Adrenal gland (tissue), 19 donors: ENCODE measurements at regions of chr1 and their contacts with region 1.

Region 1: DNA sequence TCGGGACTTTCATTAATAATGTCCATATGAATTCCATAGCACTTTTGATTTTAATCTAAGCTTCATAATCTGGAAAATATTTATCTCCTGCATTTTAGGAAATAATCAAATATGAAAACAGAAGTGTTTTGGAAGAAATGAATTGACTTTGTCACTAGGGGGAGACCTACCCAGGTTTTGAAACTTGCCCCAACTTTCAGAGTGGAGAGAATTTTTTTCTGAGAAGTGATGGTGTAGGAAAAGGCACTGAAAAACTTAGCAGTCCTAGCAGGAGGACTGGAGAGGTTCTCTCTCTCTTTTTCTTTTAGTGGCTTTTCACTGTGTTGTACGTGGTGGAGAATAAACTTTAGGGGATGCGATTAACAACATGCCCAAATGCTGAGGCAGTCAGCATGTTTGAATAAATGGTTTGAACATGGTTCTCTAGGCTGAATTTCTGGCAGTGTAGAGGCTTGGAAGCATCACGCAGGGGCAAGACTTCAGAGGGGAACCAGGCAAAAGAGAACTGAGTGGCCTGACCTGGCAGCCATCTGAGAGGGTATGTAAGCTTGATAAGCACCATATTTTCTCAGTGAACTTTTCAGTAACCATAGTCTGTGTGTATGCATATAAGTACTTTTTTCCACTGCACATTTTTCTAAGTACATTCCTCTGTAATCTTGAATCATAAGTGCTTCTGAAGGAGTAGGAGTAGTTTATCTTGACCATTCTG is 68.3 kb upstream of the NEK7 start:
- DNase-seq: peak in 4 of 7 donors; percentile 11 to 22 (median 20)
- H3K4me3 ChIP-seq: no peak overlapping the region
- H3K27ac ChIP-seq: no peak overlapping the region
- H3K4me1 ChIP-seq: no peaks in the 10 kb centered on the region
- H3K27me3 ChIP-seq: no peaks in the 10 kb centered on the region
- CTCF ChIP-seq: peak; percentile 32 to 74 (median 64)
- POLR2A ChIP-seq: no peak

Region 2: DNA sequence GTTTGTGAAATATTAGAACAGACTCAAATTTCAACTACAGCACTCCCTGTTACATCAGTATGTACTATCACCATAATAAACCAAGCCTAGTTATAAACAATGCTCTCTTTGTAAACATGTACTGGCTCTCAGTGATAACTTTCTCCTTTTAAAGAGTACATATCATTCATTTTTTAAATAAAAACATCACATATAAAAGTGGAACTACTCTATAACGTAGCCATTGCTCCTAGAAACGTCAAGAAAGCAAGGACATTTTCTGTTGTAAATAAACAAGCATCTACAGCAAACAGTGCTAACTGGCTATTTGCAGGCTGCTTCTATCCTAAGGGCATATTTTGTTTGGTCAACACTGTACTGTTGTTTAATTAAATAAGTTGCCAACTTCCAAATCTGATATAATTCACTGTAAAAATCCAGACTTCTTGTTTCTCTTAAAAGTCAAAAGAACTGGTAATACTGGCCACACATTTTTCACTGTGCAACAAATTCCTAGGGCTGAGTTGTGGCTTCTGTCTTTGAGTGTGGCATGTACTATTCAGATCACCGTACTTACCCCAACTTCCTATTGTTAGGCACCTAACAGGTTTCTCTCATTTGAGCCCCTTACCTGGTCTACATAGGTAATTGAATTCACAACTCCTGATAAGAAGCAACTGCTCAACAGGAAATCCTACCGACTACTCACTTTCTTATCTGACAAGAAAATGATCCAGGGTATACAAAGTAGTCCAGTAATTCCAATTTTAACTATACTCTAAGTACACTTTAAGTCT is 425.1 kb before region 1 on chr1:
- intact Hi-C with region 1: no loop called
- DNase-seq: no peak
- H3K4me3 ChIP-seq: no peak overlapping the region
- H3K27ac ChIP-seq: no peak overlapping the region
- H3K4me1 ChIP-seq: peaks cover 0 to 20% of the 10 kb centered on the region in 2 donors
- H3K27me3 ChIP-seq: no peaks in the 10 kb centered on the region
- CTCF ChIP-seq: no peak
- POLR2A ChIP-seq: no peak

Region 3: GRCh38 chr1:198157241-198157846 is 68.8 kb after region 1 on chr1:
- intact Hi-C with region 1: loop called in 1 of 2 experiments (anchors 5 kb)
- DNase-seq: peak; percentile 86 to 97 (median 91)
- H3K4me3 ChIP-seq: peak overlapping the region; percentile 39 to 99 (median 98)
- H3K27ac ChIP-seq: peak overlapping the region; percentile 88 to 98 (median 93)
- H3K4me1 ChIP-seq: peaks cover 17 to 36% of the 10 kb centered on the region in 2 donors
- H3K27me3 ChIP-seq: no peaks in the 10 kb centered on the region
- CTCF ChIP-seq: peak in 1 of 6 experiments; percentile 0
- POLR2A ChIP-seq: peak in 1 of 2 donors; percentile 61

Region 4: DNA sequence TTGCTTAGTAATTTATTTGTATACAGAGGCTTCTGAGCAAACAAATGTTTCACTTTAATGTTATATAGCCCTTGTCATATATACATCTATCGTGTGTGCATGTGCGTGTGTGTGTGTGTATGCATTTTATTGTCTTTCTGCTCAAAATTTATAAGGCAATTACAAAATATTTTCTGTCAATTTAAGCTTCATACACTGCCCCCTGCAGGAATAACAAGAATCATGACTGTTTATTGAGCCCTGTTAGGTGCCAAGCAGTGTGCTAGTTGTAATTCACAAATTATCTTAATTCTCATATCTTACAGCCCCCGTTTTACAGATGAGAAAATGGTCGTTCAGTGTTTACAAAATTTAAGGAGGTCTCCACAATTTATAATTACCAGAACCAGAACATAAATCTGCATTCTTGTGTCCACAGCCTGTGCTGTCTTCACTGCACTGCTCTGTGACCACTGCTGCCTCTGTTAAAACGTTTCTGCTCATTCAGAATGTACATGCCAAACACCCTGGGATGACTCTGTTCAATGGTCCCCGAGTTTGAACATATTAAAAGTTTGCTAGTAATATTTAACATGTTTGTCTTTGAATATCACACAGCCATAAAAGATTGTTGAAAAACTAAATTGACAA is 270.6 kb after region 1 on chr1:
- intact Hi-C with region 1: loop called in 1 of 2 experiments (anchors 10 kb)
- DNase-seq: no peak
- H3K4me3 ChIP-seq: no peak overlapping the region
- H3K27ac ChIP-seq: no peak overlapping the region
- H3K4me1 ChIP-seq: no peaks in the 10 kb centered on the region
- H3K27me3 ChIP-seq: no peaks in the 10 kb centered on the region
- CTCF ChIP-seq: peak; percentile 25 to 62 (median 56)
- POLR2A ChIP-seq: no peak

Region 5: DNA sequence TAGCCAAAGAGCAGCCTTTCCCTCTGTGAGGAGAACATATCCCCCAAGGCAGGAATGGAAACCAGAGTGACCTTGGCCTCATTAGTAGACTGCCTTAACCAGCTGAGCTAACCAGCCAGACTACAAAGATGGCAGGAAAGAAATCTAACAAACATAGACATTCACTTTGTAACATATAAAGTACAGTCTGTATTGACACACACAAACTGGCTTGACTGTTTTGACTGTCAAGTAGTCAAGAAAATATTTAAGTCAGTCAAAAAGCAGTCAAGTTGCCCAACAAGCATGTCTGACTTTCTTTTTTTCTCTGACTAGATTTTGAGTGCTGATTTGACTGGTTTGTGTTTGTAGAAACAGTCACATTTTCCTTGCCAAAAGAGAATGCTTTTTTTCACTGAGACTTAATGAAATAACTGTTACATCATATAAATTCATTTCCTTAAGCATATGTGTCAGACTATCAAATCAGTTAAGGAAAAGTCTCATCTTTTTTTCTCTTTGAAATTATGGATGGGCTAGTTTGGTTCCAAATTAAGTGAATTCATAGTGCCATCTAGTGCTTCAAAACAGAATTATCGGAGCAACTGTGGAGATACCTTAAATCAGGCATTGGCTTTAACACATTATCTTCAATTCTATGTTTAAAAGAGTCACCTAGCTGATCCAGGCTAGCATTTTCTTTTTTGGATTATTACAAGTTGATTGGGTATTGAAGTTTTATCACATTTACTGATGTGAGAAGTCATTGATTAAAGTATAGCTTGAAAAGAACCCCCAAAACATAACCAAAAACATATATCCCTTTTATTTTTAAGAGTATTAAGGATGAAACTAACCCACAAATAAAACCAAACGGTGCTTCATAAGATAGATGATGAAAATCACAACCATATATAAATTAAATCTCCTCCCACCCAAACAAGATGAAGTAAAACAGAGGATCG is 377.0 kb after region 1 on chr1:
- intact Hi-C with region 1: loop called (anchors 5 to 10 kb)
- DNase-seq: no peak
- H3K4me3 ChIP-seq: no peak overlapping the region
- H3K27ac ChIP-seq: no peak overlapping the region
- H3K4me1 ChIP-seq: no peaks in the 10 kb centered on the region
- H3K27me3 ChIP-seq: no peaks in the 10 kb centered on the region
- CTCF ChIP-seq: peak; percentile 59 to 82 (median 68)
- POLR2A ChIP-seq: no peak